ENCODE measurements at regions of chr2 and their contacts with region 1.

Region 1: DNA sequence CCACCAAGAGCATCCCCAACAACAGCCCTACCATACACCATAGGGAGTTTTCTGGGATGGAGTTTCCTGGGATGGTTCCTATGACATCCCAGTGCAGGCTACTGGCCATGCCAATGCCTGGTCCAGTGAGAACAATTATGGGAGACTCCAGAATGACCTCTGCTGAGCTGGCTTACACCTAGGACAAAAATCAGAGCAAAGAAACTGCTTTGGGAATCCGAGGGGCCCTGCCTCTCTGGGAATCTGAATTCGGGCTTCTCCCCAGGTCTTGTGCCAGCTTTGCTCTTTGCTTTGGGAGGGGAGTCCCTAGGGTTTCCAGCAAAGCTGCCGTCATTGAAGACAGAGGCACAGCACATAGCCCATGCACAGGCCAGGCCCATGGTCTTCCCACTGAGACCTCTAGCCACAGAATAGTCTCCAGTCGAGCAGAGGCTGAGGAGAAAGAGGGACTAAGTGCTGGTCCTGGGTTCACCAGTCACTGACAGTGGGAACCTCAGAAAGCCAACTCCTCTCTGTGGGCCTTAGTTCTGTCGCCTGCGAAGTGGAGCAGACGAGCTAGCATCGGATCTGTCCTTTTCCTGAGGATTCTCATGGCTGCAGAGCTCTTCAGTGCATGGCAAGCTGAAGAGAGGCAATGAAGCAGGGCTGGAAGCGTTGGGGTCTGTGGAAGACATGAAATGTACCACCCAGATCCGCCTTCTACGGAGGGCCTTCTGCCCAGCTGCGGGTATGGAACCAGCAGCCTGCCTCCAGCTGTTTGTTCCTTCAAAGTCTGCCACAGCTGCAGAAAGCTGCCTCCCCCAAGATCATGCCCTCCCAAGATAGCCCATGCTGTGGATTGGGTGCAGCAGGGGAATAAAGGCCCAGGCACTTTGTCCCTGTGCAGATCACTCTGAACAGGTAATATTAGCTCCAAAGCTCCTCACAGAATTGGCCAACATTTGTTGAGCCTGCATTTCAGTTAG is 11.2 kb upstream of the LBH start:
- DNase-seq: no peak
- ATAC-seq: no peak
- H3K4me3 ChIP-seq: no peak overlapping the region
- H3K27ac ChIP-seq: no peak overlapping the region
- H3K4me1 ChIP-seq: peaks cover under 1 to 3% of the 10 kb centered on the region in 2 experiments; a peak in 2 of 5 replicates
- H3K27me3 ChIP-seq: peaks cover 0 to 14% of the 10 kb centered on the region in 2 experiments; a peak in 2 of 5 replicates
- CTCF ChIP-seq: no peak
- EP300 ChIP-seq: no peak
- POLR2A ChIP-seq: no peak
- RAD21 ChIP-seq: no peak

Region 2: DNA sequence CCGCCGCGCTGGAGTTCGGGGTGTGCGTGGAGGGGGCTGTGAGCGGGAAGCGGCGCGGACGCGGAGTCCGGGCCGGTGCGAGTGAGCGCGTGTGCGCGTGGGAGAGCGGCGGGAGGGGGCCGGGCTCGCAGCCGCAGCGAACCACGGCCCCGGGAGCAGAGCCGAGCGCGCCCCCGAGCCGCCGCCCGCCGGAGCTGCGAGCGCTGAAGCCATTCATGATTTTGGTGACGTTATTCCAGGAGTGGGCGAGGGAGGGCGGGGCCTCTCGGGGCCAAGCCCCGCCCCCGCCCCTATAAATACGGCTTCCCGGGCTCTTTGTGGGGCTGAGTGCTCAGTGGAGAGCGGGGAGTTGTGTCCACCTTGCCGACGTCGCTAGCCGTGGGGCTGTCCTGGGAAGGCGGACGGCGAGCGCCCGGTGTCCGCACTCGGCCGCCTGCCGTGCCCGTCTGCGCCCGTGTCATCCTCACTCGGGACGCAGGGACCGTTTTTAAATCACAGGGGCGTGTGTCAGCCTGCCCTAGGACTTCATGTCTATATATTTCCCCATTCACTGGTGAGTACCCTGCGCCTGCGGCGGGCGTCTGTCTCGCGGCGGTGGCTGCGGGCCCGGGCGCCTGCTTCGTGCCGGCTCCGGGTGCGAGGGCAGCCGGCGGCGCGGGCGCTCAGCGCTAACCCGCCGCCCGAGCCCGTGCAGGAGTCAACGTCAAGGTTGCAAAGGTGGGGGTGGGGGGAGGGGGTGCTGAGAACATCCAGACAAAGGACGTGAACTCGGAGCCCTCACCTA is 11.2 kb after region 1 on chr2 and contains the start of gene LBH:
- CTCF ChIA-PET with region 1: interaction called, 3 read pairs
- POLR2A ChIA-PET with region 1: interaction called, 13 read pairs
- in situ Hi-C with region 1: no loop called
- intact Hi-C with region 1: no loop called
- DNase-seq: peak; percentile 90 to 95 (median 93)
- ATAC-seq: peak; percentile 86
- H3K4me3 ChIP-seq: peak within 1 kb of the TSS; percentile 61
- H3K27ac ChIP-seq: peak within 1 kb of the TSS; percentile 58
- H3K4me1 ChIP-seq: peaks cover 23 to 33% of the 10 kb centered on the region in 2 experiments; a peak in 4 of 5 replicates
- H3K27me3 ChIP-seq: no peaks in the 10 kb centered on the region
- CTCF ChIP-seq: peak in 1 of 3 experiments; percentile 27; a peak in 2 of 6 replicates
- EP300 ChIP-seq: no peak
- POLR2A ChIP-seq: peak; percentile 94
- RAD21 ChIP-seq: peak in 1 of 2 experiments; percentile 28; a peak in 2 of 4 replicates
- polyA plus RNA-seq, gene LBH: 3.1 to 5.9 TPM

Region 3: GRCh38 chr2:30293303-30293921 is 73.2 kb after region 1 on chr2:
- CTCF ChIA-PET with region 1: no interaction called
- POLR2A ChIA-PET with region 1: no interaction called
- in situ Hi-C with region 1: no loop called
- intact Hi-C with region 1: no loop called
- DNase-seq: no peak
- ATAC-seq: 0 out of 3 replicates have a peak, but pooled peaks have one; percentile 15
- H3K4me3 ChIP-seq: no peak overlapping the region
- H3K27ac ChIP-seq: no peak overlapping the region
- H3K4me1 ChIP-seq: peaks cover 13 to 18% of the 10 kb centered on the region in 2 experiments; a peak in 4 of 5 replicates
- H3K27me3 ChIP-seq: no peaks in the 10 kb centered on the region
- CTCF ChIP-seq: no peak
- EP300 ChIP-seq: no peak
- POLR2A ChIP-seq: no peak
- RAD21 ChIP-seq: no peak

Measured in K562 (cell line).